Calu3 (cell line): ENCODE measurements at regions of chrX and their contacts with region 1.

Region 1: GRCh38 chrX:108070891-108071290 is 20.5 kb downstream of the PSMD10 start:
- DNase-seq: peak; percentile 10
- H3K4me3 Mint-ChIP-seq: no peak overlapping the region
- H3K27ac Mint-ChIP-seq: no peak overlapping the region
- H3K4me1 Mint-ChIP-seq: peaks cover 15% of the 10 kb centered on the region
- H3K27me3 Mint-ChIP-seq: no peaks in the 10 kb centered on the region
- CTCF ChIP-seq: no peak

Region 2: GRCh38 chrX:107272431-107272921 is 798.4 kb before region 1 on chrX:
- CTCF ChIA-PET with region 1: no interaction called
- intact Hi-C with region 1: no loop called
- DNase-seq: peak; percentile 61
- H3K4me3 Mint-ChIP-seq: peak overlapping the region; percentile 66
- H3K27ac Mint-ChIP-seq: no peak overlapping the region
- H3K4me1 Mint-ChIP-seq: no peaks in the 10 kb centered on the region
- H3K27me3 Mint-ChIP-seq: no peaks in the 10 kb centered on the region
- CTCF ChIP-seq: peak; percentile 55

Region 3: DNA sequence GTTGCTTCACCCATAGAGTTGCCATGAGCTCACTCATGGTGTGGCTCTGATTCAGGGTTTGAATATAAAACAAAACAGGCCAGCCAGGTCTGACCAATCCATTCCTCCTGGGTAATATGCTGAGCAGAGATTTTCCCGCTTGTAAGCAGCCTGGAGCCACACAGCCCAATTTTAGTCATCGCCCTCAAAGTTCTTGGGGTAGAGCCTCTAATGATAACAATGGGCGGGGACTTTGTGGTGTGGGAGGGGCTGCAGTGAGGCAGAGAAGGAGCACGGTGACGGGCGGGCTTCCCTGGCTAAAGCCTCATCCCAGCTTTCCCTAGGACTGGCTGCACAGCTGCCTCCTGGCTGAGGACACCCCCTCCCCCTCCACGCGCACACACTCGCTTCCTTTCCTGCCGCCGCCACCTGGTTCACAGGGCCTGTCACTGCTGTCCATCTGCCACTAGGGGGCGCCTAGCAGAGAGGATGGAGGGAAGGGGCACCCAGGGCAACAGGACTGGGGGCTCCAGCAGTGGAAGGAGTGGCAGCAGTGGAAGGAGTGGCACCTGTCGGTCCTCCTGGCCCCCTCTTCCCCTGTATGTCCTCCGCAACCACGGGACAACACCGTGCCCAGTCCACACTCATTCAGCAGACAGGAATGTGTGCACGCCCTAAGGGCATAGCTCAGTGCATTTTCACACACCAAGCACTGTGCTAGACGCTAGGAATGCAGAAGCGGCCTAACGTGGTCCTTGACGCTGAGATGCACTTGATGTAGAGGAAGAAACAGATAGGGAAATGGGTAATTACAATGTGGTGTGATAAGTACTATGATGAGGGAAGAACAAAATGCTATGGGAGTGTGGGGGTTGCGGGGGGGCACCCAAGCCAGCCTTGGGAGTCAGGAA is 415.8 kb before region 1 on chrX:
- CTCF ChIA-PET with region 1: no interaction called
- intact Hi-C with region 1: loop called (anchors 5 kb)
- DNase-seq: peak; percentile 73
- H3K4me3 Mint-ChIP-seq: peak overlapping the region; percentile 17
- H3K27ac Mint-ChIP-seq: peak overlapping the region; percentile 90
- H3K4me1 Mint-ChIP-seq: peaks cover 21% of the 10 kb centered on the region
- H3K27me3 Mint-ChIP-seq: no peaks in the 10 kb centered on the region
- CTCF ChIP-seq: peak; percentile 62

Region 4: DNA sequence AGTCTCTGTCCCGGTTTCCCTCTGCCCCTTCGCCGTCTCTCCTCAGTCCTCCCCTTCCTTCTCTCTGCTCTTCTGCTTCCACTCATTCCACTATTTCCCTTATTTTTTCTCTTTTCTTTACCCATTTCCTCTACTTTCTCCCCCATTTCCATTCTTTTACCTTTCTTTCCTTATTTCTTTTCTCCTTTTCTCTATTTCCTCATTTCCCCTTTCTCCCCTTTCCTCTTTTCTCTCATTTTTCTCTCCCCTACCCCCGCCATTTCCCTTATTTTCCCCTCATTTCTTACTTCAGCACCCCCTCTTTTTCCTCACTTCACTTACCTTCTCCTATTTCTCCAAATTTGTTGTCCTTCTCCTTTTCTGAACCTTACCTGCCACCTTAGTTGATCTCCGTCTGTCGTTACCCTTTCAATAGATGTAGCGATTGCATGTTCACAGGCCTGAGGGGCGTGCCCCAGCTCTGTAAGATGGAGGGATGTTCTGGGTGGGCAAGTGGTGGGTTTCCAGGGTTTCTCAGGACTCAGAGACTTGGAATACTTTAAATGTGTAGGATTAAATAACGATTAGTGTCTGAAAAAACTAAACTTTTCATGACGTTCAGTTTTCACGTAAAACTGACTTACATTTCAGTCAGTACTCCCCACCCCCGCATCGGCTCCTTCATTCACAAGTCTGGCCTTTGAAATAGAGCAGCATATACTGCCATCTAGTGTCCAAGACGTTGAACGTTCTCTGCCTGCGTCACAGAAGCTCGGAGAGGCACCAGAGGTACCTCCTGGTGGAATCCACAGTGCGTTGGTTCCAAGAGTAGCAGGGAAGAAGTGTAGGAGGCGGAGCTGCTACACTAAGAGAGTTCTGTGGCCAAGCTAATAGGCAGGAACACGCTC is 294.0 kb before region 1 on chrX:
- CTCF ChIA-PET with region 1: no interaction called
- intact Hi-C with region 1: no loop called
- DNase-seq: peak; percentile 73
- H3K4me3 Mint-ChIP-seq: peak overlapping the region; percentile 72
- H3K27ac Mint-ChIP-seq: peak overlapping the region; percentile 42
- H3K4me1 Mint-ChIP-seq: peaks cover 20% of the 10 kb centered on the region
- H3K27me3 Mint-ChIP-seq: no peaks in the 10 kb centered on the region
- CTCF ChIP-seq: peak; percentile 61

Region 5: GRCh38 chrX:107902721-107903120 is 168.2 kb before region 1 on chrX:
- CTCF ChIA-PET with region 1: no interaction called
- intact Hi-C with region 1: loop called (anchors 10 kb)
- DNase-seq: no peak
- H3K4me3 Mint-ChIP-seq: no peak overlapping the region
- H3K27ac Mint-ChIP-seq: no peak overlapping the region
- H3K4me1 Mint-ChIP-seq: no peaks in the 10 kb centered on the region
- H3K27me3 Mint-ChIP-seq: no peaks in the 10 kb centered on the region
- CTCF ChIP-seq: no peak

Region 6: DNA sequence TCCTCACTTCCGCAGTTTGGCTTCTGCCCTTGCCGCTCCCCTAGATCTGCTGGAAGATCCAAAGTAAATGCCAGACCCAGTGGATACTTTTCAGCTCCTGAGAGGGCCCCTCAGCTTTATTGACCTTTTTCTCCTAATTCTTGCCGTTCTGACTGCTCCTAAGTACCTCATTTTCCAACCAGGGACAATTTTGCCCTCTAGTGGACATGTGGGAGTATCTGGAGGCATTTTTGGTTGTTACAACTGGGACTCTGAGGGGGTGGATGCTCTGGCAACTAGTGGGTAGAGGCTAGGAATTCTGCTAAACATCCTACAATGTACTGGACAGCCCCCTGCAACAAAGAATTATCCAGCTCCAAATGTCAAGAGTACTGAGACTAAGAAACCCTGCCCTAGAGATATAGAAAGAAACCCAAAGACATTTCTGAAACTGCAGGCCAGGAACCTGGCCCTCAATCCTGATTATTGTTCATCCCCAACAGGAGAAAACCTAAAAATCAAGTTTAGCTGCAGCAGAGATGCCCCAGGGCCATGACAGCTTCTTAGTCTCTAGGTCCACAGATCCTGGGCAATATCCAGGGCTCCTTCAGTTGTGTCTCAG is 92.1 kb before region 1 on chrX:
- CTCF ChIA-PET with region 1: no interaction called
- intact Hi-C with region 1: loop called (anchors 2 kb)
- DNase-seq: peak; percentile 15
- H3K4me3 Mint-ChIP-seq: no peak overlapping the region
- H3K27ac Mint-ChIP-seq: no peak overlapping the region
- H3K4me1 Mint-ChIP-seq: no peaks in the 10 kb centered on the region
- H3K27me3 Mint-ChIP-seq: no peaks in the 10 kb centered on the region
- CTCF ChIP-seq: peak; percentile 40

Region 7: DNA sequence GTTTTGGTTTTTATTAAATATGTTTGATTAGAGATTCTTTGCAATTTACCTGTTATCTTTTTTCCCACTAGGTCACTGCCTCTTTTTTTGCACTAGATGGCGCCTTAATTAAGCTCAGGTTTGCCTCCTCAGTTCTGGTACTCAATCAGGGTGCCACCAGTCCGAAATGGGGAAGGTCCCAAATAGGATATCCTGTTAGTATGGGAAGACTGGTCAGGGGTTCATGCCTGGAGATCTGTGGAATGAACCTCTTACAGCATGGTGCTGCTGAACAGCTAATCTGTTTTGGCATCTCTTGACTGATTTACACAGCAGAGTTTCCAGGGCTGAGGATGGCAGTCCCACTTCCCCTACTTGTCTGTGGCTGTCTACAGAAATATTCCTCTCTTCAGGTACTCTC is 50.3 kb before region 1 on chrX:
- CTCF ChIA-PET with region 1: interaction called, 16 read pairs
- intact Hi-C with region 1: loop called (anchors 1 kb)
- DNase-seq: no peak
- H3K4me3 Mint-ChIP-seq: no peak overlapping the region
- H3K27ac Mint-ChIP-seq: no peak overlapping the region
- H3K4me1 Mint-ChIP-seq: peaks cover 26% of the 10 kb centered on the region
- H3K27me3 Mint-ChIP-seq: no peaks in the 10 kb centered on the region
- CTCF ChIP-seq: no peak

Region 8: DNA sequence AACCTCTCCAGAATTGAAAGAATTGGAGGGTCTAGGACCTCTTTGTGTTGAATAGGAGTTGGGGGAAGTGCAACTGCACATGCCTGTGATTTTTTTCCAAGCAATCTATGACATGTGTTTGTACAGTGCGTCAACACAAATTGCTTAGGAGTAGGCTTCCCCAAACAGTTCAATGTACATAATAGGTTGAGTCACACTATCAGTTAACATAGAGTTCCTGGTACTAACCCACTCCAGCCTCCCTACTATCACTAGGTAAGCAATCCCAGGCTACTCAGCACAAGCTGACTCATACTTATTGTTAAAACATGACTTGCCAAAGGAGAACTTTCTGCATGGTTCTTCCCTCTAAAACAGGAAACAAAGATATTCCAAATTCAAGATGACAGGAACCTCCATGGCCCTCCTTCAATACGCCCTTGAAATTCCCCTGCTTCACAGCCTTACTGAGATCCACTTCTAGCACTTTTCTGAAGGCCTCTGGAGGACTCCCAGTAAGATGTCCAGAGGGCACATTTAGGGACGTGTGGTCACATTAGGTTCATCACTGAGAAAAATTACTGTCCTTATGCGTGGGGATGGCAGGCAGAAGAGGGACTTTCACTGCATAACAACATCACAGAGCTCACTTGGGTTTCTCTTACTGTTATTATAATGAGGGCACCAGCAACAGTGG is 34.5 kb before region 1 on chrX:
- CTCF ChIA-PET with region 1: interaction called, 4 read pairs
- intact Hi-C with region 1: loop called (anchors 5 kb)
- DNase-seq: peak; percentile 44
- H3K4me3 Mint-ChIP-seq: no peak overlapping the region
- H3K27ac Mint-ChIP-seq: peak overlapping the region; percentile 57
- H3K4me1 Mint-ChIP-seq: peaks cover 49% of the 10 kb centered on the region
- H3K27me3 Mint-ChIP-seq: no peaks in the 10 kb centered on the region
- CTCF ChIP-seq: no peak